ENCODE measurements at regions of chrX and their contacts with region 1.

Region 1: DNA sequence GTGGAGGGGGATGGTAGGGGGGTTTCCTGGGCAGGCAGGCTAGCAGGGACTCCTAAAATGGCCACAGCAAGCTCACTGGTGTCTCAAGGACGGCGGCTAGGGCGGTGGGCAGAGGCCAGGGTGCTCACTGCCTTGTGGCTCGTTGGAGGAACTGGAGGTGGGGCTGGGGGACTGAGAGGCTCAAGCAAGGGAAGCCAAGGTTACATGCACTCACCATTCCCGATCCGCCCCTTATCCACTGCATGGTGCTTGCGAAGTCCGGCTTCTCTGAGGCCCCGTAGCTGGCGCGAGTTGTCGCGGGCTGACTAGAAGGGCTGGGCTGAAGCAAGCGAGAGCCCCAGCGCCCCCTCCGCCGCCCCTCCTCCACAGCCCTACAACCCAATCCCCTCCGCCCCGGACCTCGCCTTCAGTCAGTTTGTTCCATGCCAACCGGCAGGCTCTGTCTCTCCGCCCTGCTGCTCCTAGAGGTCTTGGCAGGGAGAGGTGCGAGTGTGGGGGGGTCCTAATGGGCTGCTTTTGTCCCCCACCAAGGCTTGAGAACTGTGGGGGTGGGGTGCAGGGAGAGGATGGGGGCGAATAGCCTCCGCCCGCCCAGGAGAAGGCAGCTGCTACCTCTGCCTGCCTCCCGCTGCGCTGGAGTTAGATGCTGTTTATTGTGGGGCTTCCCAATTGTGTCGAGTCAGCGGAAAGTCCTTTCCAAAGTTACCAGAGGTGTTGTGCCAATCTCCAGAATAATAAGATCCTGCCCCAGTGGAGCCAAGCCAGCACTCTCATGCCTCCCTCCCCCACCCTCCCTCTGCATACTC is at the start of gene ARHGEF9:
- DNase-seq: peak; percentile 34 to 71
- H3K4me3 ChIP-seq: peak within 1 kb of the TSS; percentile 54 to 77 (median 70)
- H3K27ac ChIP-seq: peak within 1 kb of the TSS; percentile 87
- H3K4me1 ChIP-seq: peaks cover 0 to 7% (median 0%) of the 10 kb centered on the region in 4 experiments; a peak in 2 of 7 replicates
- H3K27me3 ChIP-seq: no peaks in the 10 kb centered on the region
- CTCF ChIP-seq: no peak
- EP300 ChIP-seq: no peak
- POLR2A ChIP-seq: peak in 1 of 2 experiments; percentile 60; a peak in 1 of 3 replicates
- RAD21 ChIP-seq: 0 out of 4 replicates have a peak, but pooled peaks of 1 of the 2 experiments have one; percentile 5
- total RNA-seq, gene ARHGEF9: 28.7 and 37.1 TPM in 2 replicates

Region 2: DNA sequence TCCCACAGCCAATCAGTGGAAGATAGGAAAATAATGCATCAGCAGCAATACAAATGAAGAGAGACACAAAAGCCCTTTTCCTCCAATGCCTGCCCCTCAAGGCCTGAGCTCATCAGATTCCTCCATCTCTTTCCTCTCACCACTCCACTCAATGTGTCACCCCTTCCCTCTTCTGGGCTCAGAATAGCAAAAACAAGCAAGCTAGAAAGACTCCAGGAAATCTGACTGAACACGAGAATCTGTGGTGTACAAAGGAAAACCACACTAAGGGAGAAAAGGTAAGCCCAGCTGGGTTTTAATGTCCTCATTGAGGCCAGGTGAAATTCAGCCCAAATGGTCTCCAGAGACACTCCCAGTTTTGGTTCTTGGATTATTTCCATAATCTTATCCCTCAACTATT is 46.4 kb before region 1 on chrX:
- CTCF ChIA-PET with region 1: no interaction called
- POLR2A ChIA-PET with region 1: no interaction called
- DNase-seq: no peak
- H3K4me3 ChIP-seq: no peak overlapping the region
- H3K27ac ChIP-seq: no peak overlapping the region
- H3K4me1 ChIP-seq: no peaks in the 10 kb centered on the region; a peak in 1 of 7 replicates
- H3K27me3 ChIP-seq: no peaks in the 10 kb centered on the region
- CTCF ChIP-seq: no peak
- EP300 ChIP-seq: no peak
- POLR2A ChIP-seq: no peak
- RAD21 ChIP-seq: no peak

Region 3: DNA sequence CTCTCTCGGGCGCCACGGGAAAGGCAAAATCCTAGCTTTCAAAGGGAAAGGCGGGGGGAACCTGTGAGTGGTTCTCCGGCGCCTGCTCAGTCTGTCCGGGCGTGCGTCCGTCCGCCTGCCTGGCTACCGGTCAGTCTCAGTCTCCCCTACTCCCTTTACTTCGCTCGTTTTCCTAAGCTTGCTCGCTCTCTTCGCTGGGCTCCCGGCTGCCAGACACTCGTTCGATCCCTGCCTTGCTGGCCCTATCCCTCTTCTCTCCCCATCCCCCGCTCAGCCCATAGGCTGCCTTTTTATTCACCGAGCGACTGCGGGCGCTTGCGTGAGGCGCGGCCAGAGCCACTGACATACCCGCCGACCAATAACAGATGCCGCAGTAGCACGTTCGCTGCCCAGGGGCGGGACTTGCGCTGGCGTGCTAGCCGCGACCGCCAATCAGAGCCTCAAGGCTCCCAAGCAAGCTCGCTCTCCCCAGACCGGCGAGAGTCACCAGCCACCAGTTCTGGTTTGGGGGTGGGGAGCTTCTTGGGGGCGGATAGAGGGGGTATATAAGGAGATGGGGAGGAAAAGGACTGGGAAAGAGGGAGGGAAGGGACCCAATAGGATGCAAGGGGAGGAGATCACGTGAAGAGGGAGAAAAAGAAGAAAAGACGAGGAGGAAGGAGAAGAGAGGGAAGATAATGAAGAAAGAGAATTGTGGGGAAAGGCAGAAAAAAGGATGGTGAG is 30.1 kb before region 1 on chrX:
- CTCF ChIA-PET with region 1: interaction called, 3 read pairs
- POLR2A ChIA-PET with region 1: interaction called, 12 read pairs
- DNase-seq: peak; percentile 80 to 86
- H3K4me3 ChIP-seq: peak overlapping the region; percentile 65 to 75 (median 70)
- H3K27ac ChIP-seq: peak overlapping the region; percentile 91; the same call in 1 of the 2 replicates
- H3K4me1 ChIP-seq: peaks cover 0 to 9% (median 5%) of the 10 kb centered on the region in 4 experiments; a peak in 5 of 7 replicates
- H3K27me3 ChIP-seq: no peaks in the 10 kb centered on the region
- CTCF ChIP-seq: no peak
- EP300 ChIP-seq: no peak
- POLR2A ChIP-seq: peak; percentile 59 to 75
- RAD21 ChIP-seq: no peak